Activated B cell treated with CpG ODN at 0.5 μM for 24 hours (primary cell): ENCODE measurements at regions of chr9 and their contacts with region 1.

Region 1: GRCh38 chr9:6412487-6413364 is at the start of gene UHRF2:
- DNase-seq: peak; percentile 95
- ATAC-seq: peak; percentile 87
- H3K4me3 Mint-ChIP-seq: peak within 1 kb of the TSS; percentile 82
- H3K27ac Mint-ChIP-seq: peak within 1 kb of the TSS; percentile 96
- H3K4me1 Mint-ChIP-seq: peaks cover 61% of the 10 kb centered on the region
- H3K27me3 Mint-ChIP-seq: no peaks in the 10 kb centered on the region
- CTCF ChIP-seq: no peak
- total RNA-seq, gene UHRF2: 81.1 and 114 TPM in 2 replicates

Region 2: GRCh38 chr9:4679268-4680172 is 1733.2 kb before region 1 on chr9 and contains the start of gene CDC37L1:
- CTCF ChIA-PET with region 1: no interaction called
- POLR2A ChIA-PET with region 1: interaction called, 7 read pairs
- intact Hi-C with region 1: loop called (anchors 5 kb)
- DNase-seq: peak; percentile 100
- ATAC-seq: peak; percentile 95
- H3K4me3 Mint-ChIP-seq: no peak within 1 kb of the TSS
- H3K27ac Mint-ChIP-seq: no peak within 1 kb of the TSS
- H3K4me1 Mint-ChIP-seq: peaks cover 7% of the 10 kb centered on the region
- H3K27me3 Mint-ChIP-seq: no peaks in the 10 kb centered on the region
- CTCF ChIP-seq: no peak
- total RNA-seq, gene CDC37L1: 12.3 and 14.7 TPM in 2 replicates

Region 3: DNA sequence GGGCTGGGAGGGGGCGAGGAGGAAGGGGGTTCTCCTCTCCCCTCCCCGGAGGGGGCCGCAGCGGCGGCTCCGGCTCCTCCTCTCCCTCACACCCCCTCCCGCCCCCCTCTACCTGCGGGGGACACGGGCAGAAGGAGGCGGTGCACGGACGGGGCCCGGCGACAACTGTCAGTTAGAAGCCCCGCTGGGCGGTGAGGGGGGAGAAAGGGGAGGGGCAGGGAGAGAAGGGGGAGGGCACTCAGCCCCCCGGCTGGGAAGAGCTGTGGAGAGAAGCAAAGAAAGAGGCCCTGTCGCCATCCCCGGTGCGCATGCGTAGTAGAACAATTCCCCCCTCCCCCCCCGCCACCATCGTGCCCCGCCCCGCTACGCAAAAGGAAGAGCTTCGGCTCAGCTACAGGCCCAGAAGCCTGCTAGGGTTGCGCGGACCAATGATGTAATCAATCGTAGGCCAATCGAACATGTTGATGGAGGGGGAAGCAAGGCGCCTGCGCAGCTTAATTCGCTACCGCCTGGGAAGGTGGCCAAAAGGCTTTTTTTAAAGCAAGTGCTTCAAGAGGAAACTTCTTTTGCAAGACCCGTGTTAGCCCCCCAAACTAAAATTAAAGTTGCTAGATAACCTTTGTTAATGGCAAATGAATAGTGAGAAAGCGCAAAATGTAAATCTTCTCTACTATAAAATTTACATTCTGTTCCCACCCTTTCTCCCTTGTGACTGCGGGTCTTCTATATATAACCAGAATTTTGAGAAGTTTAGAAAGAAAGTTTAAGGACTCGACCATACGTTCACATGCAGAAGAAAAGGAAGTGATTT is 404.4 kb before region 1 on chr9:
- CTCF ChIA-PET with region 1: no interaction called
- POLR2A ChIA-PET with region 1: interaction called, 13 read pairs
- intact Hi-C with region 1: loop called (anchors 1 kb)
- DNase-seq: peak; percentile 82
- ATAC-seq: peak; percentile 75
- H3K4me3 Mint-ChIP-seq: peak overlapping the region; percentile 85
- H3K27ac Mint-ChIP-seq: peak overlapping the region; percentile 87
- H3K4me1 Mint-ChIP-seq: peaks cover 57% of the 10 kb centered on the region
- H3K27me3 Mint-ChIP-seq: no peaks in the 10 kb centered on the region
- CTCF ChIP-seq: no peak

Region 4: DNA sequence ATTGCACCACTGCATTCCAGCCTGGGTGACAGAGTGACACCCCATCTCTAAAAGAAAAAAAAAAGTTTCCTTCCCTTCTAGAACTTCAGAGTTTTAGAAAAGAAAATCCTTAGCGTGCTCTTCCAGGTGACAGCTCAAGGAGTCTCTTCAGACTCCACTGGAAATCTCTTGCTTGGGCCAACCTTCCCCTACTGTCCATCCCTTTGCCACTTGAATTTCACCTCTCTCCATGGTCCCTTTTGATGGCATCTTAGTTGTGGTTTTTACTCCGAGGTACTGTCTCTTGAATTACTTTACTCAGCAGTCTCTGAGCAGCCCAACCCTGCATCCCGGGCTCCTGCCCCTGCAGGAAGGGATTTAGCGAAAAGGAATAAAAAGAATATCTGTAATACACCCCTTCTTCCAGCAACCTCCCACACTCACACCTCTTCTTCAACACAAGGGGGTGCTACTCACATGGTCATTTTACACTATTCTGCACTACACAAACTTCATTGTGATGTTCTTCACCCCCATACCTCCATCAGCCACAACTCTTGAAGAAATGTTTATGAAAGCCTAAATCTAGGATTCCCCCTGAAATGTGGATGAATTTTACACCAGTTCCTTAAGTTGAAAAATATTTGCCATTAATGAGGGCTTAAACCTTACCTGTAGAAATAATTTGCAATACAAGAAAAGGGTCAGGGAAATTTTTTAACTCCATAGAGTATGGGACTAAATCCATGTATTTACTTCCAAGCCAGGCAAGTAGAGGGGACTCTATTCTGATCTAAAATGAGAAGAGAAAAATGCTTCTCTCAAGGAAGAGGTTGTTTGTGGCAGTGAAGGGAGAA is 58.7 kb before region 1 on chr9:
- CTCF ChIA-PET with region 1: interaction called, 12 read pairs
- POLR2A ChIA-PET with region 1: interaction called, 15 read pairs
- intact Hi-C with region 1: loop called (anchors 1 kb)
- DNase-seq: no peak
- ATAC-seq: peak; percentile 91
- H3K4me3 Mint-ChIP-seq: no peak overlapping the region
- H3K27ac Mint-ChIP-seq: no peak overlapping the region
- H3K4me1 Mint-ChIP-seq: peaks cover 12% of the 10 kb centered on the region
- H3K27me3 Mint-ChIP-seq: peaks cover 4% of the 10 kb centered on the region
- CTCF ChIP-seq: peak; percentile 85

Region 5: DNA sequence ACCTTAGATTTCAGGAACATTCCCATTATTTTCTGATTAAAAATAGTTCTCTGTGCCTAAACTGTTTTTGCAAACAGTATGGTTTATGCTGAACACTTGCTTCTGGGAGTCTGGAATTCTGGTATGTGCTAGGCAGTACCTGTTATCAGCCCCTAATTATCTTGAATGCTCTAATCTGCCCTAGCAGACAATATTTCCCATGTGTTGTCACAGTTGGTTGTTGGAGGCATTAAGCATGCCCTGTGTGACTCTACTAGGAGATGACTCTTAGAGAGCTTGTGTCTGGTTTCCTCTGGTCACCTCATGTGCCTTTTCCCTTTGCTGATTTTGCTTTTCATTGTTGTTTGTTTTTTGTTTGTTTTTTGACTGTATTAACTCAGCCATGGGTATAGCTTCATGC is 36.9 kb after region 1 on chr9:
- CTCF ChIA-PET with region 1: no interaction called
- POLR2A ChIA-PET with region 1: no interaction called
- intact Hi-C with region 1: loop called (anchors 5 kb)
- DNase-seq: no peak
- ATAC-seq: no peak
- H3K4me3 Mint-ChIP-seq: no peak overlapping the region
- H3K27ac Mint-ChIP-seq: peak overlapping the region; percentile 28
- H3K4me1 Mint-ChIP-seq: peaks cover 74% of the 10 kb centered on the region
- H3K27me3 Mint-ChIP-seq: no peaks in the 10 kb centered on the region
- CTCF ChIP-seq: no peak

Region 6: GRCh38 chr9:6686396-6686795 is 273.7 kb after region 1 on chr9:
- CTCF ChIA-PET with region 1: no interaction called
- POLR2A ChIA-PET with region 1: interaction called, 59 read pairs
- intact Hi-C with region 1: loop called (anchors 1 kb)
- DNase-seq: no peak
- ATAC-seq: no peak
- H3K4me3 Mint-ChIP-seq: peak overlapping the region; percentile 50
- H3K27ac Mint-ChIP-seq: peak overlapping the region; percentile 84
- H3K4me1 Mint-ChIP-seq: peaks cover 75% of the 10 kb centered on the region
- H3K27me3 Mint-ChIP-seq: no peaks in the 10 kb centered on the region
- CTCF ChIP-seq: no peak

Region 7: GRCh38 chr9:7894231-7894630 is 1481.5 kb after region 1 on chr9:
- CTCF ChIA-PET with region 1: no interaction called
- POLR2A ChIA-PET with region 1: no interaction called
- intact Hi-C with region 1: no loop called
- DNase-seq: no peak
- ATAC-seq: no peak
- H3K4me3 Mint-ChIP-seq: no peak overlapping the region
- H3K27ac Mint-ChIP-seq: no peak overlapping the region
- H3K4me1 Mint-ChIP-seq: no peaks in the 10 kb centered on the region
- H3K27me3 Mint-ChIP-seq: no peaks in the 10 kb centered on the region
- CTCF ChIP-seq: no peak